Sigmoid colon (tissue), 7 donors: ENCODE measurements at regions of chr1 and their contacts with region 1.

Region 1: DNA sequence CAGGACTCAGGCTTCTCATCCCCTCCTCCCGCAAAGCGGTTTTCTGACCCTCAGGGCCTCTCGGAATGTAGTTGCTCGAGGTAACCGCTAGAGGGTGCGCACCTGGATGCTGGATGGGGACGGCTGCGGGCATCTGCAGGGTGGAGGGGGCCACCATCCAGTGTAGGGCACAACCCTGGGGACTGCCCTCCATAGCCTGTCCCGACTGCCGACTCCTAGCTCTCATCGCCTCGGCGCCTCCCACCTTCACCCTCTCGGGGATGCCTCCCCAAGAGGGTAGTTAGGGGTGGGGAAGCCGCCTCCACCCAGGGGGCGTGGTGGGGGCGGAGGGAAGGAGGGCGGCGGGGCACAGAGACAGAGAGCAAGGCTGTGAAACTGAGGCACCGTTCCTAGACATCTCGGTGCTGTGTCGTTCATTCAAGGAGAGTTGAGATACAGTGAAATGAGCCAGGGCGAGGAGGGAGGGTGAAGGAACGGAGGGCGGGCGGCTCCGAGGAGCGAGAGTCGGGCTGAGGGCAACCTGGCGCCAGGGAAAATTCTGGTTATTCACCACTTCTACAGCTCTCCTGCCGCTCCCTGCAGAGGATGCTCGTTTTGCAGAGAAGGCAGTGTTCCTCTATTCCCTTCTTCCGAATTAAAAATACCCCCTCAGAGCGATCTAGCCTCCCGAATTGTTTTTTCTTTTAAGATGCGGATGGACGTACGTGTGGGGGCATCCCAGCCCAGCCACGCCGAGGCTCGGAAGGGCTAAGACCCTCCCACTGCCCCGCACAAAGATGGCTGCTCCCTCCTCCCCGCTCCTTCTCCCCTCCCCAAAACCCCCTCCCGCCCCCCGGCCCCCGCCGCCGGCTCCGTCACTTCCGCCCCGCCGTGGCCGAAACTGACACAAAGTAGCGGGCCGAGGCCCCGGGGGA is at the start of gene ATP8B2:
- DNase-seq: peak; percentile 88
- H3K4me3 ChIP-seq: peak within 1 kb of the TSS; percentile 69 to 85 (median 76)
- H3K27ac ChIP-seq: peak within 1 kb of the TSS; percentile 93 to 98 (median 96)
- H3K4me1 ChIP-seq: peaks cover 0 to 50% (median 41%) of the 10 kb centered on the region in 4 donors
- H3K27me3 ChIP-seq: no peaks in the 10 kb centered on the region
- CTCF ChIP-seq: peak; percentile 86 to 92 (median 92)
- EP300 ChIP-seq: no peak
- POLR2A ChIP-seq: no peak
- total RNA-seq, gene ATP8B2: 53.1 to 64.3 (median 56.6) TPM

Region 2: GRCh38 chr1:154434346-154435085 is 109.6 kb after region 1 on chr1:
- intact Hi-C with region 1: loop called (anchors 5 kb)
- DNase-seq: peak; percentile 98
- H3K4me3 ChIP-seq: peak overlapping the region; percentile 18 to 50 (median 40)
- H3K27ac ChIP-seq: peak overlapping the region; percentile 91 to 99 (median 96)
- H3K4me1 ChIP-seq: peaks cover 0 to 99% (median 90%) of the 10 kb centered on the region in 4 donors
- H3K27me3 ChIP-seq: no peaks in the 10 kb centered on the region
- CTCF ChIP-seq: no peak
- EP300 ChIP-seq: peak in 3 of 4 donors; percentile 13 to 48 (median 46)
- POLR2A ChIP-seq: no peak